ENCODE measurements at regions of chr17 and their contacts with region 1.

Region 1: DNA sequence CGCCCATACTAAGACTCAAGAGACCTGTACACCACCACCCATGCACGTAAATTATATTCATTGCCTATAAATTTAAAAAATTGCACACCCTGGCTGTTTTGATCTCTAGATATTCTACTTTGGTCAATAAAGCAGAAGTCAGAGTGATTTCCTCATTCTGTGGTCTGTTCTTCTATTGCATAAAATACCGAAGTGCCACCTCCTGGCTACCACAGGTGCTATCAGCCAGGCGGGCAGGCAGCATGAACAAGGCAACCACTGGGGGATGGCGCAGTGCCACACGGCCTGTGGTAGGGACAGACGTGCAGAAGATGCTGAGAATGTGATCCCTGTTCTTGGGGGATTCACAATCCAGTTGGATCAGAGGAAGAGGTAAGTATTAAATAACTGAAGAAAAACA is 122.3 kb downstream of the CDK5R1 start:
- H3K4me3 Mint-ChIP-seq: no peak overlapping the region
- H3K27ac Mint-ChIP-seq: no peak overlapping the region
- H3K4me1 Mint-ChIP-seq: peaks cover 8% of the 10 kb centered on the region
- H3K27me3 Mint-ChIP-seq: peaks cover 15% of the 10 kb centered on the region

Region 2: GRCh38 chr17:32461853-32462617 is 147.1 kb before region 1 on chr17:
- intact Hi-C with region 1: loop called (anchors 5 kb)
- H3K4me3 Mint-ChIP-seq: no peak overlapping the region
- H3K27ac Mint-ChIP-seq: no peak overlapping the region
- H3K4me1 Mint-ChIP-seq: peaks cover 13% of the 10 kb centered on the region
- H3K27me3 Mint-ChIP-seq: no peaks in the 10 kb centered on the region

Region 3: GRCh38 chr17:32551186-32551955 is 57.7 kb before region 1 on chr17:
- intact Hi-C with region 1: no loop called
- H3K4me3 Mint-ChIP-seq: no peak overlapping the region
- H3K27ac Mint-ChIP-seq: no peak overlapping the region
- H3K4me1 Mint-ChIP-seq: peaks cover 26% of the 10 kb centered on the region
- H3K27me3 Mint-ChIP-seq: no peaks in the 10 kb centered on the region